Activated B cell treated with CpG ODN at 0.5 μM for 24 hours (primary cell): ENCODE measurements at regions of chr19 and their contacts with region 1.

Region 1: GRCh38 chr19:41563854-41564514 is 12.0 kb upstream of the CEACAM21 start:
- DNase-seq: no peak
- ATAC-seq: peak; percentile 51
- H3K4me3 Mint-ChIP-seq: peak overlapping the region; percentile 83
- H3K27ac Mint-ChIP-seq: peak overlapping the region; percentile 53
- H3K4me1 Mint-ChIP-seq: peaks cover 55% of the 10 kb centered on the region
- H3K27me3 Mint-ChIP-seq: peaks cover 9% of the 10 kb centered on the region
- CTCF ChIP-seq: no peak

Region 2: DNA sequence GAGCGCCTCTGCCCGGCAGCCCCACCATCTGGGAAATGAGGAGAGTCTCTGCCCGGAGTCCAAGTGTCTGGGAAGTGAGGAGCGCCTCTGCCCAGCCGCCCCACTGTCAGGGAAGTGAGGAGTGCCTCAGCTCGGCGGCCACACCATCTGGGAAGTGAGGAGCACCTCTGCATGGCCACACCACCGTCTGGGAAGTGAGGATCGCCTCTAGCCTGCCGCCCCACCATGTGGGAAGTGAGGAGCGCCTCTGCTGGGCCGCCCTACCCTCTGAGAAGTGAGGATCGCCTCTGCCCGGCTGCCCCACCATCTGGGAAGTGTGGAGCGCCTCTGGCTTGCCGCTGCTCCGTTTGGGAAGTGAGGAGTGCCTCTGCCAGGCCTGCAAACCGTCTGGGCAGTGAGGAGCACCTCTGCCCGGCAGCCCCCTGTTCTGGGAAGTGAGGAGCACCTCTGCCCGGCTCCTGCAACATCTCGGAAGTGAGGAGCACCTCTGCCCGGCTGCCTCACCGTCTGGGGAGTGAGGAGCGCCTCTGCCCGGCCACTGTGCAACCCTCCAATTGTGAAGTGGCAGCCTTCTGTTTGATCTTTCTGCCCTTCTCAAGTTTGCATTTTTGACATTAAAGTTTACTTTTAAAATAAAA is 48.9 kb before region 1 on chr19:
- CTCF ChIA-PET with region 1: no interaction called
- POLR2A ChIA-PET with region 1: interaction called, 9 read pairs
- intact Hi-C with region 1: loop called (anchors 1 kb)
- DNase-seq: no peak
- ATAC-seq: no peak
- H3K4me3 Mint-ChIP-seq: no peak overlapping the region
- H3K27ac Mint-ChIP-seq: no peak overlapping the region
- H3K4me1 Mint-ChIP-seq: peaks cover 22% of the 10 kb centered on the region
- H3K27me3 Mint-ChIP-seq: peaks cover 7% of the 10 kb centered on the region
- CTCF ChIP-seq: no peak

Region 3: GRCh38 chr19:41531438-41532311 is 32.3 kb before region 1 on chr19:
- CTCF ChIA-PET with region 1: interaction called, 12 read pairs
- POLR2A ChIA-PET with region 1: interaction called, 14 read pairs
- intact Hi-C with region 1: no loop called
- DNase-seq: peak; percentile 64
- ATAC-seq: peak; percentile 78
- H3K4me3 Mint-ChIP-seq: peak overlapping the region; percentile 76
- H3K27ac Mint-ChIP-seq: peak overlapping the region; percentile 86
- H3K4me1 Mint-ChIP-seq: peaks cover 84% of the 10 kb centered on the region
- H3K27me3 Mint-ChIP-seq: no peaks in the 10 kb centered on the region
- CTCF ChIP-seq: no peak

Region 4: DNA sequence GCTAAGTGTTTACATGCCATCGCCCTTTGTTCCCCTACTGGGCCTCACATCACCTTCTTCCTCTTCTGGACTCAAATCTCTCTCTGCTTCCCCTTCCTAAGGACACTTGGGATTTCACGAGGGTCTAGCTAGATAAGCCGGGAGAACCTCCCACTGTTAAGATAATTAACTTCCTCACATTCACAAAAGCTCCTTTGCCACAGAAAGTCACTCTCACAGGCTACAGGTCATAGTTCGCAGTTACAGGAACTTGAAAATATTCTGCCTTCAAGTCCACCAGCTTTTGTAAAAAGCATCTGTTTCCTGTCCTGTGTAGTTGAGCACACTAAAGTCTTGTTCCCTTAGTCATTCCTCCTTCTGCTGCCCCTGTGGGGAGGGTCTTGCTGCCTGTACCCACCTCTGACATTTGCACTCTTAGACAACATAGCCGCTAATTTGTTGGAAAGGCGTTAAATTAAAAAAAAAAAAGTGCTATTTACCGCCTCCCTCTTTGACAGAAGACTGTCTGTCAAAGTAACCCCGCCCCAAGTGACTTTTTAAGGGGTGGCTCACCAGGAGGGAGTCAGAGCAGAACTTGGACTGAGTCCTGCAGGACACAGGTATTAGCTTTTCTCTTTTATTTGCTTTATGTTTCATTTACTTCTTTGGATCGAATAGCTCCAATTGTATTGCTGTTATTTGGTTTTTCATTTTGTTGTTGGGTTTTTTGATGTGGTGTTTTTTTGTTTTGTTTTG is 14.9 kb before region 1 on chr19:
- CTCF ChIA-PET with region 1: interaction called, 104 read pairs
- POLR2A ChIA-PET with region 1: interaction called, 25 read pairs
- intact Hi-C with region 1: loop called (anchors 1 kb)
- DNase-seq: no peak
- ATAC-seq: peak; percentile 58
- H3K4me3 Mint-ChIP-seq: peak overlapping the region; percentile 97
- H3K27ac Mint-ChIP-seq: peak overlapping the region; percentile 99
- H3K4me1 Mint-ChIP-seq: peaks cover 92% of the 10 kb centered on the region
- H3K27me3 Mint-ChIP-seq: no peaks in the 10 kb centered on the region
- CTCF ChIP-seq: no peak